ENCODE measurements at regions of chr17 and their contacts with region 1.

Region 1: DNA sequence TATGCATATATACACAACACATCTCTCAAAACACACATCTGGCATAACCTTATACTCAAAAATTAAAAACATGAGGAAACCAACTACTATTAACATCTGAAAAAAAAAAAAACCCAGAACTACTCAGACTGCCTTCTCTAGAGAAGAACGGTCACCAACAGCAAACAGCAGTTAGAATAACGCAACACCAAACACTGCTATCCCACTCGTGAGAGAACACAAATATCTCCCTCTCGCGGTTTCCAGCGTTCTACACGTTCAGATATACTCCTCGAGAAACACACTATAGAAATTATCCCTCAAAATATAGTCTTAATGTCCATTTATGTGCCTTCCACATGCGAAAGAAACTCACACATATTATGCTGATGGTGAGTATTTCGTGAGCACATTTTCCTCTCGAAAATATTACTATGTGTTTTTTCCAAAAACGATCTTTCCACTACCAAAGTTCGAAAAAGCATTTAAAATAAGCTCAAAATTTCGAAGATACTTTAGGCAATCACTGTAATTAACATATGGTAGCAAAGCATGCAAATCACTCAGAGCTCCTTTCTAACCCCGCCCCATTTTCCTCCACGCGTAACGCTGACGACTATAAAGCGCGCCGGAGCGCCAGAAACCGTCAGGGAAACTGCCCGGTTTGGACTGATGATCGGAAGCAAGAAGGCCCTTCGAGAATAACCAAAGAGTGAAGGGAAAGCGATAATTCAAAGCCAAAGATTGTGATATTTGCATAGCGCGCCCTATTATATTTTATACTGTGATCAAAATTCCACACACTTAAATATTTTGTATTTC is 60.1 kb downstream of the TEX14 start:
- DNase-seq: peak; percentile 98
- H3K4me3 Mint-ChIP-seq: no peak overlapping the region
- H3K27ac Mint-ChIP-seq: no peak overlapping the region
- H3K4me1 Mint-ChIP-seq: peaks cover 3% of the 10 kb centered on the region
- H3K27me3 Mint-ChIP-seq: no peaks in the 10 kb centered on the region

Region 2: GRCh38 chr17:58565780-58566189 is 65.9 kb before region 1 on chr17:
- CTCF ChIA-PET with region 1: no interaction called
- intact Hi-C with region 1: no loop called
- DNase-seq: no peak
- H3K4me3 Mint-ChIP-seq: no peak overlapping the region
- H3K27ac Mint-ChIP-seq: no peak overlapping the region
- H3K4me1 Mint-ChIP-seq: peaks cover 6% of the 10 kb centered on the region
- H3K27me3 Mint-ChIP-seq: no peaks in the 10 kb centered on the region

Region 3: GRCh38 chr17:58577642-58578091 is 54.1 kb before region 1 on chr17:
- CTCF ChIA-PET with region 1: interaction called, 3 read pairs
- intact Hi-C with region 1: loop called (anchors 1 kb)
- DNase-seq: peak; percentile 62
- H3K4me3 Mint-ChIP-seq: no peak overlapping the region
- H3K27ac Mint-ChIP-seq: no peak overlapping the region
- H3K4me1 Mint-ChIP-seq: peaks cover 3% of the 10 kb centered on the region
- H3K27me3 Mint-ChIP-seq: no peaks in the 10 kb centered on the region

Region 4: DNA sequence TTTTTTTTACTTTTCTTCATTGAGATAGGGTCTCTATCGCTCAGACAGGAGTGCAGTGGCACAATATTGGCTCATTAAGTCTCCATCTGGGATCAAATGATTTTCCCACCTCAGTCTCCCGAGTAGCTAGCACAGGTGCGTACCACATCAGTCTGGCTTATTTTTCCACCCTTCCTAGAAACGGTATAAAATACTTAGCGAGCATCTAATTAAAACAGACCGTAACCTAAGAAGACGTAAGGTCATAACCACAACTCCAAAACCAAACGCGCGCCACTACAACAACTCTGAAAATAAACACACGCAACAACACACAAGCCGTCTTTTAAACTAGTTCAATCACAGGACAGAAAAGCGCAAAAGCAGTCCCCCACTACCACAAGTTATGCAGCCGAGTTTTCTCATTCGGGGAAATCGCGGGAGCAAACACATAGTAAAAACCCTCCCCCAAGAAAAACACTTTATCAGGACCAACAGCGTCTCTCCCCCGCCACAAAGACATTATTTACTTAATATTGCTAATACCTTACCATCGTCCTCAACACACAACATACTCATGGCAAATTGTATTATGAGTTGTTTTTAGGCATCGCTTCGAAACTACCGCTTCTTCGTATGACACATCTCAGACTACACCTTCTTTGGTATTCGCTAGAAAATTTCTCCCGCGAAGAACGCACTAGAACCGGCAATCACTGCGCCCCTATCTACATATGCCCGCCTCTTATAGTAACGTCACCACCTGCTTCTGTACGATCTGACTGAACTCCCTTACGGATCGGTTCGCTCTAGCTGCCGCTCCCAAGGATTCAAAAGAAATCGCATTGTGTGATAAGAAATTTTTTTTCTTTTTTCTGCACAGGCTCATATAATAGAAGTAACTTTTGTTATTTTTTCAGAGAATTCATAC is 27.3 kb after region 1 on chr17:
- CTCF ChIA-PET with region 1: no interaction called
- intact Hi-C with region 1: loop called (anchors 1 kb)
- DNase-seq: peak; percentile 88
- H3K4me3 Mint-ChIP-seq: peak overlapping the region; percentile 69
- H3K27ac Mint-ChIP-seq: peak overlapping the region; percentile 98
- H3K4me1 Mint-ChIP-seq: peaks cover 16% of the 10 kb centered on the region
- H3K27me3 Mint-ChIP-seq: peaks cover 8% of the 10 kb centered on the region

Region 5: DNA sequence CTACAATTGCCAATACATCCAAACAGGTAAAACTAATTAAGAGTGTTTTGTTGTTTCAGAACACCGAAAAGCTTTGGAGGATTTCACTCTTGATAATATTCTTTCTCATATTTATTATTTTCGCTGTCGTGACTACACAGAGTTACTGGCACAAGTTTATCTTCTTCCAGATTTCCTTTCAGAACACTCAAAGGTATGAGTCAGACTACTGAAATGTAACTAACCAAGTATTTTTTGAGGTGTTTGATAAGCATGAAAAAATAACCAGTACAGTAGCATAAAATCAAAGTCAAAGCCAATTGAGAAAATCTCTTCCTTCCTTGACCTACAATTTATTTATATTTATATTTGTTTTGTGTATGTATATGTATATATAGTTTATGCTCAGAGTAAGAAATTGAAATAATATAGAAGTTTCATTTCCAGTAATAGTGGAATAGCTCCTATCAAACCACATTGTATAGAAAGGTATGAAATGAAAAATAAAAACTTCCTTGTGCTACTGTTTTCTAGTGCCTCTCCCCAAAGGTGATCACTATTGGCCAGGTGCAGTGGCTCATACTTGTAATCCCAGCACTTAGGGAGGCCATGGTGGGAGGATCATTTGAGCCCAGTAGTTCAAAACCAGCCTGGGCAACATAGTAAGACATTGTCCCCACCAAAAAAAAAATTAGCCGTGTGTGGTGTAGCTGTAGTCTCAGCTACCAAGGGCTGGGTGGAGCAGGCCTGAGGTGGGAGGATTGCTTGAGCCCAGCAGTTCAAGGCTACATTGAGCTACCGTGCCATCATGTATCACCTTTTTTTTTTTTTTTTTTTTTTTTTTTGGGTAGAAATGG is 71.6 kb after region 1 on chr17:
- CTCF ChIA-PET with region 1: no interaction called
- intact Hi-C with region 1: loop called (anchors 2 kb)
- DNase-seq: peak; percentile 26
- H3K4me3 Mint-ChIP-seq: no peak overlapping the region
- H3K27ac Mint-ChIP-seq: peak overlapping the region; percentile 71
- H3K4me1 Mint-ChIP-seq: peaks cover 30% of the 10 kb centered on the region
- H3K27me3 Mint-ChIP-seq: no peaks in the 10 kb centered on the region

Region 6: GRCh38 chr17:58728786-58729185 is 97.1 kb after region 1 on chr17:
- CTCF ChIA-PET with region 1: no interaction called
- intact Hi-C with region 1: no loop called
- DNase-seq: no peak
- H3K4me3 Mint-ChIP-seq: no peak overlapping the region
- H3K27ac Mint-ChIP-seq: no peak overlapping the region
- H3K4me1 Mint-ChIP-seq: no peaks in the 10 kb centered on the region
- H3K27me3 Mint-ChIP-seq: no peaks in the 10 kb centered on the region

Region 7: DNA sequence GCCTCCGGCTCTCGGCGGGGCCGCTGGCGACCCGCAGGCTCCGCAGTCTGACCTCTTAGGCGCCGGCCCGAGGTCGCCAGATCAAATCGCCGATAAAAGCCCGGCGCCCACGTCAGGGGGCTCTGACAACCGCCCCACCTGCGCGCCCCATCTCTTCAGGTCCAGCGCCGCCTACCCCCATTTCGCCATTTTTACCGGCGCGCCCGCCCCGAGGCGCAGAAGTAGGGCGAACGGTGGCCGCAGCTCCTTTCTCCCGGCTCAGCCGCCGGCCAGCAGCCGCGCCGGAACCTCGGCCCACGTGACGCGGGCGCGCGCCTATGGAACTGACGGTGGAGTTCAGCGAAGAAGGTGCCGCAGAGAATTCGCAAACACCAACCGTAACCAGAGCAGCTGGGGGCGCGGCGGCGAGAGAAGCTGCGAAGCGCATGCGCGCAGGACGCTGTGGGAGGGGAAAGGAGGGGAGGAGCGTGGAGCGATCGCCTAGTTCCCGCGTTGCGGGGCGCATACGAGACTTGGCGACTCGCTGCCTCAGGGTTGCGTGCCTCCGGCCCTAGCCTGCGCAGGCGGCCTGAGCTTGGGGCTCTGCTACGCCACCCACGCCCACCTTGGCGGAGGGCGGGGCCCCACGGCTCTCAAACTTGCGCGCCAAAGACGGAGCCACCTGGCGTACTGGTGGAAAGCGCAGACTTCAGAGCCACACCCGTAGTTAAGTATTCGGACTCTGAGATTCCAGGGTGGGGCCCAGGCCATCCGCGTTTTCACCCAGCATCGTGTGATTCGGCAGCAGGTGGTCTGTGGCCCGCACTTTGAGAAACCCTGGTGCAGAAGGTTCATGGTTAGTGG is 475.0 kb after region 1 on chr17 and contains the start of gene TRIM37:
- CTCF ChIA-PET with region 1: no interaction called
- intact Hi-C with region 1: loop called (anchors 1 kb)
- DNase-seq: peak; percentile 99
- H3K4me3 Mint-ChIP-seq: peak within 1 kb of the TSS; percentile 96
- H3K27ac Mint-ChIP-seq: peak within 1 kb of the TSS; percentile 89
- H3K4me1 Mint-ChIP-seq: peaks cover 54% of the 10 kb centered on the region
- H3K27me3 Mint-ChIP-seq: no peaks in the 10 kb centered on the region
- total RNA-seq, gene TRIM37: 19.9 to 24.1 TPM